CD4-positive, alpha-beta memory T cell (primary cell): ENCODE measurements at regions of chr18 and their contacts with region 1.

Region 1: GRCh38 chr18:58716060-58716756 is 44.9 kb downstream of the MALT1 start:
- DNase-seq: peak in 4 of 5 donors; percentile 33 to 42 (median 37)
- H3K4me3 ChIP-seq: no peak overlapping the region
- H3K4me3 Mint-ChIP-seq: peak overlapping the region; percentile 32 to 88 (median 80)
- H3K27ac ChIP-seq: no peak overlapping the region
- H3K27ac Mint-ChIP-seq: peak overlapping the region; percentile 77 to 90 (median 85)
- H3K4me1 ChIP-seq: peaks cover 44% of the 10 kb centered on the region
- H3K4me1 Mint-ChIP-seq: peaks cover 50 to 68% (median 57%) of the 10 kb centered on the region in 4 donors
- H3K27me3 ChIP-seq: no peaks in the 10 kb centered on the region
- H3K27me3 Mint-ChIP-seq: no peaks in the 10 kb centered on the region

Region 2: DNA sequence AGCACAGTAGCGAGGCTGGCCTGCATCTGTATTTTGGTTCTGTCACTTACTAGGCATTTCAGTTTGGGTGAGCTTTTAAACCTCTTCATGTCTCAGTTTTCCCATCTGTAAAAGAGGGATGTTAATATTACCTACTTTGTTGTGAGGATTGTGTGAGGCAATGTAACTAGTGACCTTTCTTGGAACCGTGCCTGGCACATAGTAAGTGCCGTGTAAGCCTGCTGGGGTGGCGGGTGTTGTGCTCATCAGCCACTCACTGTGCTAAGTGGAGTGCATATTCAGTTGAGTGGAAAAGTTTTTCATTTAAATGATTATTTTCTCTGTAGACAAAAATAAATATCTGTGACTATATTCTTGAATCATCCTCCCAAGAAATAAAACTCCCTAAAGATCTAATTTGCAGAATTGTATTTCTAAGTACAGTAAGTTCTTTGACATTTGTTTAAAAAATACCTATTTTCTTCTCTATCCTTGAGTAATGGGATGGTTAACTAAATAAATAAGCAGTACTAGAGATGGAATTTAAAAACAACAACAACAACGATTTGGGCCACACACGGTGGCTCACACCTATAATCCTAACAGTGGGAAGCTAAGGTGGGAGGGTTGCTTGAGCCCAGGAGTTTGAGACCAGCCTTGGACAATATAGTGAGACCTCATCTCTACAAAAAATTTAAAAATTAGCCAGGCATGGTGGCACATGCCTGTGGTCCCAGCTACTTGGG is 11.7 kb after region 1 on chr18:
- CTCF ChIA-PET with region 1: interaction called, 4 read pairs
- POLR2A ChIA-PET with region 1: no interaction called
- intact Hi-C with region 1: loop called (anchors 2 kb)
- DNase-seq: no peak
- H3K4me3 ChIP-seq: no peak overlapping the region
- H3K4me3 Mint-ChIP-seq: no peak overlapping the region
- H3K27ac ChIP-seq: no peak overlapping the region
- H3K27ac Mint-ChIP-seq: peak overlapping the region in 1 of 7 donors; percentile 19
- H3K4me1 ChIP-seq: no peaks in the 10 kb centered on the region
- H3K4me1 Mint-ChIP-seq: peaks cover 6 to 14% (median 11%) of the 10 kb centered on the region in 4 donors
- H3K27me3 ChIP-seq: no peaks in the 10 kb centered on the region
- H3K27me3 Mint-ChIP-seq: no peaks in the 10 kb centered on the region